Endothelial cell of umbilical vein (primary cell): ENCODE measurements at regions of chr20 and their contacts with region 1.

Region 1: GRCh38 chr20:17569616-17570346 is at the start of gene DSTN:
- DNase-seq: peak; percentile 95
- H3K4me3 ChIP-seq: peak within 1 kb of the TSS; percentile 84 to 92 (median 88)
- H3K27ac ChIP-seq: peak within 1 kb of the TSS; percentile 91
- H3K4me1 ChIP-seq: peaks cover 23% of the 10 kb centered on the region
- H3K27me3 ChIP-seq: no peaks in the 10 kb centered on the region
- CTCF ChIP-seq: no peak
- POLR2A ChIP-seq: peak; percentile 87
- total RNA-seq, gene DSTN: 300 and 307 TPM in 2 replicates

Region 2: GRCh38 chr20:17273717-17274116 is 296.1 kb before region 1 on chr20:
- CTCF ChIA-PET with region 1: no interaction called
- POLR2A ChIA-PET with region 1: no interaction called
- dilution Hi-C with region 1: no loop called
- intact Hi-C with region 1: no loop called
- DNase-seq: no peak
- H3K4me3 ChIP-seq: no peak overlapping the region
- H3K27ac ChIP-seq: no peak overlapping the region
- H3K4me1 ChIP-seq: no peaks in the 10 kb centered on the region
- H3K27me3 ChIP-seq: no peaks in the 10 kb centered on the region
- CTCF ChIP-seq: no peak
- POLR2A ChIP-seq: no peak

Region 3: DNA sequence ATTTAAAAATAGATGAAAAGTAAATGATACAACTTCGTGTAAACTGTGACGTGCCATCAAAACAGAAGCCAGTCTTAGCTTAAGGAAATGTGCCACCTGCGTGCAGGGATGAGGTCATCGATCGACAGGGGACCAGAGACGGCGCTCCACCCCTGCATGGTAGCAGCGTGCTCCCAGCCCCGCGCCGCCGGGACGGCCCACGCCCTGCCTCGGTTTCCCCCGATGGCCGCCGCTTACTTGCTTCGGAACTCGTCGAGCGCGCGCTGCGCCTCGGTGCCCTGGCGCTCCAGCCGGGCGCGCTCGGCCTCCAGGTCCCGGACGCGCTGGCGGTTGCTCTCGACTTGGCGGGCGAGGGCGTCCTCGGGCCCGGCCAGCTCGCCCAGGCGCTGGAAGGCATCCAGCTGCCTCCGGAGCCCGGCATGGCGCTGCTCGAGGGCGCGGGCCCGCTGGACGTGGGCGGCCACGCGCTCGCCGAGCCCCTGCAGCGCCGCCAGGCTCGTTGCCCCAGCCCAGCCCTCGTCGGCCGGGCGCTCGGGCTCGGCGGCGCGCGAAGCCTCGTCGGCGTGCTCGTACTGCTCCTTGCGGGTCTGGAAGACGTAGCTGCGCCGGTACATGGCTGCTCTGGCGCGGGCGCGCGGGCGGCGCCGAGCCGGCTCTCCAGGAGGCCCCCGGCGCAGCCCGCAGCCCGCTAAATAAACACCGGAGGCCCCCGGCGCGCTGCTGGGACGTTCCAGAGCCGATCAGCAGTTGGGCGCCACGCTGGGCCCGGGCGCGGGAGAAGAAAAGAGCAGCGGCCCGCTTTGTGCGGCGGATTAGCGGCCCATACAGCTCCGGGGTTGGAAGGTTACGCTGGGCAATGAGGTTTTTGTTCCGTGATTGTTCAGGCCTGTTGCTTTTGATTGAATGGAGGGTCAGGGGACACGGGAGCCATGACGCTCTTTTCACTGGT is 38.8 kb before region 1 on chr20 and contains the start of gene BFSP1:
- CTCF ChIA-PET with region 1: interaction called, 42 read pairs
- POLR2A ChIA-PET with region 1: interaction called, 5 read pairs
- dilution Hi-C with region 1: no loop called
- intact Hi-C with region 1: loop called (anchors 1 kb)
- DNase-seq: peak; percentile 72
- H3K4me3 ChIP-seq: peak within 1 kb of the TSS; percentile 16 to 47 (median 45)
- H3K27ac ChIP-seq: peak within 1 kb of the TSS; percentile 41
- H3K4me1 ChIP-seq: peaks cover 15% of the 10 kb centered on the region
- H3K27me3 ChIP-seq: no peaks in the 10 kb centered on the region
- CTCF ChIP-seq: no peak
- POLR2A ChIP-seq: peak; percentile 41
- total RNA-seq, gene BFSP1: 3.7 and 5.2 TPM in 2 replicates

Region 4: GRCh38 chr20:17558154-17558940 is 11.4 kb before region 1 on chr20:
- CTCF ChIA-PET with region 1: interaction called, 20 read pairs
- POLR2A ChIA-PET with region 1: interaction called, 22 read pairs
- dilution Hi-C with region 1: no loop called
- intact Hi-C with region 1: loop called (anchors 1 kb)
- DNase-seq: peak; percentile 95
- H3K4me3 ChIP-seq: peak overlapping the region; percentile 2 to 38 (median 4)
- H3K27ac ChIP-seq: peak overlapping the region; percentile 96
- H3K4me1 ChIP-seq: peaks cover 41% of the 10 kb centered on the region
- H3K27me3 ChIP-seq: no peaks in the 10 kb centered on the region
- CTCF ChIP-seq: no peak
- POLR2A ChIP-seq: peak; percentile 89

Region 5: GRCh38 chr20:17604852-17605660 is 35.3 kb after region 1 on chr20:
- CTCF ChIA-PET with region 1: interaction called, 12 read pairs
- POLR2A ChIA-PET with region 1: interaction called, 8 read pairs
- dilution Hi-C with region 1: no loop called
- intact Hi-C with region 1: no loop called
- DNase-seq: no peak
- H3K4me3 ChIP-seq: no peak overlapping the region
- H3K27ac ChIP-seq: no peak overlapping the region
- H3K4me1 ChIP-seq: no peaks in the 10 kb centered on the region
- H3K27me3 ChIP-seq: no peaks in the 10 kb centered on the region
- CTCF ChIP-seq: no peak
- POLR2A ChIP-seq: no peak

Region 6: GRCh38 chr20:17968366-17969279 is 398.8 kb after region 1 on chr20 and contains the starts of genes MGME1 and SNX5:
- CTCF ChIA-PET with region 1: no interaction called
- POLR2A ChIA-PET with region 1: no interaction called
- dilution Hi-C with region 1: no loop called
- intact Hi-C with region 1: loop called (anchors 1 kb)
- DNase-seq: peak; percentile 100
- H3K4me3 ChIP-seq: peak within 1 kb of the TSS; percentile 76 to 97 (median 97)
- H3K27ac ChIP-seq: peak within 1 kb of the TSS; percentile 92
- H3K4me1 ChIP-seq: peaks cover 62% of the 10 kb centered on the region
- H3K27me3 ChIP-seq: no peaks in the 10 kb centered on the region
- CTCF ChIP-seq: no peak
- POLR2A ChIP-seq: peak; percentile 92
- total RNA-seq, gene MGME1: 18.0 and 26.2 TPM in 2 replicates
- total RNA-seq, gene SNX5: 109 and 121 TPM in 2 replicates